ENCODE measurements at regions of chr1 and their contacts with region 1.

Region 1: DNA sequence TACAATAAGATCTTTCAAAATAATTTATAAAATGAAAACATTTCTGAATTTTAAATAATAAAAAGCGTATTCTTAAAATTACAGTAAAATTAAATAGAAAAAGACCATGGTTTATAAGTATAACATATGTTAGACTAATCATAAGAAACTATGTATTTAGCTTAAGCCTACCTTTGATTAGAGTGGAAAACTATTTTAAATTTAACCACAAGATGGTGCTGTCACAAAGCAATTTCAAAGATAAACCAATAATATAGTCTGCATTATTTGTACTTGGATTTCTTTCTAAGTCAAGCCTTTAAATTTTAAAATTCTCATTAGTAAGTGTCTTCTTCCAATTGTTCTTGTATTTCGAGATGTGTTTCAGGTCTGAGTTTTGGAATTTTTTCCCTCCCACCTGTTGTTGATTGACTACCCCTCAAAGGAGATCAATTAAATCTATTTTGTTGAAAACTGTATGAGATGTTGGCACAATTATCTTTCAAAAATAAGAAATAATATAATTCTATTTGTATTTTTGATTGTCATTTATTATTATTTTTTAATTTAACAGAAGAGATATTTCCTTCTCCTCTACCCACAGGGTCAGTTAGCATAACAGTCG is 459.8 kb downstream of the KCNT2 start:
- DNase-seq: no peak
- ATAC-seq: no peak
- H3K4me3 ChIP-seq: no peak overlapping the region
- H3K27ac ChIP-seq: no peak overlapping the region
- H3K4me1 ChIP-seq: peaks cover 0 to 5% (median 0%) of the 10 kb centered on the region in 12 donors
- H3K27me3 ChIP-seq: no peaks in the 10 kb centered on the region
- CTCF ChIP-seq: peak; percentile 35 to 77 (median 58)
- POLR2A ChIP-seq: no peak

Region 2: GRCh38 chr1:195939844-195940243 is 208.6 kb before region 1 on chr1:
- intact Hi-C with region 1: loop called in 2 of 10 experiments (anchors 10 kb)
- DNase-seq: no peak
- ATAC-seq: no peak
- H3K4me3 ChIP-seq: no peak overlapping the region
- H3K27ac ChIP-seq: no peak overlapping the region
- H3K4me1 ChIP-seq: no peaks in the 10 kb centered on the region
- H3K27me3 ChIP-seq: no peaks in the 10 kb centered on the region
- CTCF ChIP-seq: peak in 6 of 12 donors; percentile 3 to 36 (median 24)
- POLR2A ChIP-seq: no peak

Region 3: DNA sequence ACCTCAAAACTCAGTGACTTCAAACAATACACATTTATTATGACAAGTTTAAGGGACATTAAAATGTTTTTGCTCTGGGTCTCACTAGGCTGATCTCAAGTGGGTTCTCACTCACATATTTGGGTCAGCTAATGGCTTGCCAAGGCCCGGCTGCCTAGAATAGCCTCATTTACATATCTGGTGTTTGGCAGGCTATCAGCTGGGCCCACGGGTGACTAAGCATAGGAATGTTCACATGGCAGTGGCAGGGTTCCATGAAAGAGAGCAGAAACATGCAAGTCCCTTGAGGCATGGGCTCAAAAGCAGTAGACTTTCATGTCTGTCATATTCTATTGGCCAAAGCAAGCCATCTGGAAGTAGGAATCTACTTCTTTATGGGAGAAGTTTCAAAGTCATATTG is 32.8 kb before region 1 on chr1:
- intact Hi-C with region 1: no loop called
- DNase-seq: peak; percentile 74 to 93 (median 84)
- ATAC-seq: peak; percentile 99 to 100 (median 100)
- H3K4me3 ChIP-seq: no peak overlapping the region
- H3K27ac ChIP-seq: peak overlapping the region in 11 of 12 donors; percentile 36 to 74 (median 62)
- H3K4me1 ChIP-seq: peaks cover 0 to 14% (median 5%) of the 10 kb centered on the region in 12 donors
- H3K27me3 ChIP-seq: no peaks in the 10 kb centered on the region
- CTCF ChIP-seq: no peak
- POLR2A ChIP-seq: no peak

Region 4: GRCh38 chr1:196309386-196309785 is 160.9 kb after region 1 on chr1:
- intact Hi-C with region 1: loop called in 7 of 10 experiments (anchors 5 to 10 kb)
- DNase-seq: no peak
- ATAC-seq: no peak
- H3K4me3 ChIP-seq: no peak overlapping the region
- H3K27ac ChIP-seq: no peak overlapping the region
- H3K4me1 ChIP-seq: no peaks in the 10 kb centered on the region
- H3K27me3 ChIP-seq: no peaks in the 10 kb centered on the region
- CTCF ChIP-seq: peak in 8 of 12 donors; percentile 8 to 47 (median 28)
- POLR2A ChIP-seq: no peak

Region 5: DNA sequence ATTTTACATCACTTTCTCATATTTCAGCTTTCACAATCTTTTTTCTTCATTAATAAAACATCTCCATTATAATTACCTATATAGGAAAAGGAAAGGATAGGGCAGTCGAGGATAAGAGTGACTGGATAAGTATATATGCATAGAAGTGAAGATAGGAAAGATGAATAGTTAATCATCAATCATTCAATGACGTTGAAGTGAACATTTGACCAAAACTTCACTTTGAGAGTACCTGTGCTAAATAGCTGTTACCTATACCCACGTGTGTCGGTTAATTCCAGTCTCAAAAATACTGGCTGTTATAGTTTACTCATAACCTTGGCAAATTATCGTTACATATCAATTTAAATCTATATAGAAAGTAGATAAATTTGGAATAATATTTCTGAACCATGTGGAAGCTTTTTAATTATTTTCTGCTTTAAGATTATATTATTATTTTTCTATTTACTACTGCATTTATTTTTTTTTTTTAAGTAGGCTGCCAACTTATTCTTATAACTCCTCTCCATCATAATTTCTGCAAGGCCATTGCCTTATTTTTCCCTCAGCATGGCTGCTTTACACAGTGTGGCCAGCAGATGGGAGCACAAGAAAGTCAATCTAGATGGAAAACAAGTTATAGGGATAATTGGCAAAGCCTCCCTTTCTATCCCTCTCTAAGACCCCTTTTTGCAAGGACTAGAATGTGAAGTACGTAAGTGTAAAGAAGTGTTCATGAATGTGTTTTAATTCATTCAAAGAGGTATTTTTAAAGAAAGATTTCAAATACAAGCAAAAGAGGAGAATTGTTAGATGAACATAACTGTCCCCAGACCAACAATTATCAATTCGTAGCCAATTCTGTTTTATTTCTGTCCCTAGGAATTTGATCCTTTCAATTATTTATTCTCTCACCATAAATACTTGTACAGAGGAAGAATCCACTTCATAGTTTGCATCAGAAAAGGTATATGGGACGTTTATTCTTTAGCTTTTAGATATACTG is 169.4 kb after region 1 on chr1:
- intact Hi-C with region 1: loop called in 1 of 10 experiments (anchors 10 kb)
- DNase-seq: no peak
- ATAC-seq: no peak
- H3K4me3 ChIP-seq: no peak overlapping the region
- H3K27ac ChIP-seq: no peak overlapping the region
- H3K4me1 ChIP-seq: no peaks in the 10 kb centered on the region
- H3K27me3 ChIP-seq: no peaks in the 10 kb centered on the region
- CTCF ChIP-seq: peak in 9 of 12 donors; percentile 15 to 62 (median 41)
- POLR2A ChIP-seq: no peak

Measured in heart left ventricle (tissue), 16 donors.